ENCODE measurements at regions of chr5 and their contacts with region 1.

Region 1: GRCh38 chr5:138575194-138576015 is at the start of gene HSPA9:
- DNase-seq: peak; percentile 99
- H3K4me3 Mint-ChIP-seq: peak within 1 kb of the TSS; percentile 98
- H3K27ac Mint-ChIP-seq: peak within 1 kb of the TSS; percentile 99
- H3K4me1 Mint-ChIP-seq: peaks cover 39% of the 10 kb centered on the region
- H3K27me3 Mint-ChIP-seq: no peaks in the 10 kb centered on the region
- total RNA-seq, gene HSPA9: 457 to 472 TPM

Region 2: DNA sequence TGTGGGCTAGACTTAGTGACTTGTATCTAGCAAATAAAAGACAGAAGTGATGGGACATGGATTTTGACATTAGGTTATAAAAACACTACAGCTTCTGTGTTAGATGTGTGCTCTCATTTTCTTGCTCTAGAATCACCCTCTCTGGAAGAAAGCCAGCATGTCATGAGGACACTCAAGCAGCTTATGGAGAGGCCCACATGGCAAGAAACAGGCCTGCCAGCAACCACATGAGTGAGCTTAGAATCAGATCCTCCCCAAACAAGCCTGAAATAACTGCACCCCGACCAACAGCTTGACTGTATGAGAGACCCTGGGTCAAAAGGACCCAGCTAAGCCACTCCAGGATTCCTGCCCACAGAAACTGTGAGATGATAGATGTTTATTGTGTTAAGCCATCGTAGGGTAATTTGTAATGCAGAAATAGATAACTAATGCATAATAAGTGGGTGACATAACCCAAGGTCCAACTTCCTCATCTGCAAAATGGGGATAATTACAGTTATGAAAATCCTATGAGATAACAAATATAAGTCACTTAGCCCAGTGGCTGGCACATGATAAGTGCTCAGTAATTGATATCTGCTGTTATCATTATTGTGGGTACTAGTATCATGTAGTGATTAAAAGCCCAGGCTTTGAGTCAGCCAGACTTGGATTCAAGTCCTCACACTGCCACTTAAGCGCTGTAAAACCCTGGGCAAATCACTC is 926.0 kb before region 1 on chr5:
- CTCF ChIA-PET with region 1: no interaction called
- intact Hi-C with region 1: no loop called
- DNase-seq: no peak
- H3K4me3 Mint-ChIP-seq: no peak overlapping the region
- H3K27ac Mint-ChIP-seq: no peak overlapping the region
- H3K4me1 Mint-ChIP-seq: no peaks in the 10 kb centered on the region
- H3K27me3 Mint-ChIP-seq: no peaks in the 10 kb centered on the region

Region 3: DNA sequence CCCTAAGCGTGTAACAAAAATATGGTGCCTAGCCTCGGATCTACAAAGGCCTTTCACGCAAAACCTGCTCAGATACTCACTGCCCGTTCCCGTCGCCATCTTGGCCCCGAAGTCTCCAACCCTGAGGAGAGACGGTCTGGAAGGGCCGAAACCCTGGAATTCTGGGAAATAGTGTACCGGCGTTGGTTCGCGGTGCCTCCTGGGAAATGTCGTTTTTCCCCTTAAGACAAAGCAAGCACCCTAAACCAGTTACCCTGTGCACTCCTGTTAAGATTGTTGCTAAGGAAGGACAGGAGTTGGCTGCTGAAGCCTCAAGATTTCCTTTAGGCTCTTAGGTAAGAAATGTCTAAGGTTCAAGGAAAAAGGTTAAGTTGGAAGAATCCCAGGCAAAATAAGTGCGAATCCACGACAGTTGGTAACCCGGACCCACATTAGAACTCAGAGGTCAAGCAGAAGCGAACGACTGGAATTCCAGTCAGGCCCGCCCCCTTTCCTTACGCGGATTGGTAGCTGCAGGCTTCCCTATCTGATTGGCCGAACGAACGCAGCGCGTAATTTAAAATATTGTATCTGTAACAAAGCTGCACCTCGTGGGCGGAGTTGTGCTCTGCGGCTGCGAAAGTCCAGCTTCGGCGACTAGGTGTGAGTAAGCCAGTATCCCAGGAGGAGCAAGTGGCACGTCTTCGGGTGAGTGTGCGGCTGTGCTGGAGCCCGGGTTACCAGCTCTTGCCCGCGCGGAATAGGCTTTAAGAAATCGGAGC is 396.7 kb before region 1 on chr5 and contains the starts of genes BRD8 and KIF20A:
- CTCF ChIA-PET with region 1: no interaction called
- intact Hi-C with region 1: loop called (anchors 1 kb)
- DNase-seq: peak; percentile 98
- H3K4me3 Mint-ChIP-seq: no peak within 1 kb of the TSS
- H3K27ac Mint-ChIP-seq: peak within 1 kb of the TSS; percentile 63
- H3K4me1 Mint-ChIP-seq: peaks cover 12% of the 10 kb centered on the region
- H3K27me3 Mint-ChIP-seq: no peaks in the 10 kb centered on the region
- total RNA-seq, gene BRD8: 94.8 to 95.6 TPM
- total RNA-seq, gene KIF20A: 78.9 to 81.9 TPM

Region 4: DNA sequence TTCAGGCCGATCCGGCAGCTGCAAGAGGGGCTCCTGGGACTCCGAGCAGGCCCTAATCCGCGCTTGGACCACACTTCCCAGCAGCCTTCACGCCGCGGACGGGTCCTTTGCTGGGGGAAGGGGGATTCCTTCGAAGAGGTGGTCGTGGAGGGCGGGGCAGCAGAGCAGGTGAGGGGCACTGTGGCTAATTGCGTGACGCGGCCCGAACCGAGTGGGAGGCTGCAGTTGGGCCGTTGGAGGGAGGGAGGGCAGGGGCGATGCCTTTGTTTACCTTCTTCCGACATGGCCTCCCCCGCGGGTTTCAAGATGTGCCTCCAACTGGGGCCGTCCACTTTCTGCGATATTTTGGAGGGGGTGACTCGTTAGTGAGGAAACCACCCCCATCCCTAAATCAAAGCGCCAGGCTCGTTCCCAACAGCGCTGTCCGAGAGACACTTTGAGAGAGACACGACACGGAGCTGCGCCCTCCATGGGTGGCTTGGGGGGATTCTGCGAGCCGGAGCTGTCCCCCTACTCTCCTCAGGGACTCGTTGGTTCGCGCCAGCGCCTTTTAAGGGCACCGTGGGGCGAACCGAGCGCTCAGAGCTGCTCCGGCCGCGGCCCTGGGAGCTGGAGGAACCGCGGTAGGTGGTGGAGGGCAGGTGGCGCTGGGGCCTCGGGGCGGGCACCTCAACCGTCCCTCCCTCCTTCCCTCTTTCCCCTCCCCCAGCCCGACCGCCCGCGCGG is 237.6 kb before region 1 on chr5 and contains the start of gene FAM53C:
- CTCF ChIA-PET with region 1: no interaction called
- intact Hi-C with region 1: loop called (anchors 2 kb)
- DNase-seq: peak; percentile 91
- H3K4me3 Mint-ChIP-seq: peak within 1 kb of the TSS; percentile 87
- H3K27ac Mint-ChIP-seq: peak within 1 kb of the TSS; percentile 98
- H3K4me1 Mint-ChIP-seq: peaks cover 27% of the 10 kb centered on the region
- H3K27me3 Mint-ChIP-seq: no peaks in the 10 kb centered on the region
- total RNA-seq, gene FAM53C: 20.7 to 21.8 TPM

Region 5: GRCh38 chr5:138594305-138595058 is 19.1 kb after region 1 on chr5:
- CTCF ChIA-PET with region 1: interaction called, 15 read pairs
- intact Hi-C with region 1: no loop called
- DNase-seq: no peak
- H3K4me3 Mint-ChIP-seq: no peak overlapping the region
- H3K27ac Mint-ChIP-seq: no peak overlapping the region
- H3K4me1 Mint-ChIP-seq: no peaks in the 10 kb centered on the region
- H3K27me3 Mint-ChIP-seq: peaks cover 25% of the 10 kb centered on the region

Region 6: GRCh38 chr5:138654281-138654867 is 79.0 kb after region 1 on chr5:
- CTCF ChIA-PET with region 1: no interaction called
- intact Hi-C with region 1: loop called (anchors 1 kb)
- DNase-seq: peak; percentile 85
- H3K4me3 Mint-ChIP-seq: no peak overlapping the region
- H3K27ac Mint-ChIP-seq: peak overlapping the region; percentile 31
- H3K4me1 Mint-ChIP-seq: peaks cover 19% of the 10 kb centered on the region
- H3K27me3 Mint-ChIP-seq: peaks cover 78% of the 10 kb centered on the region

Region 7: DNA sequence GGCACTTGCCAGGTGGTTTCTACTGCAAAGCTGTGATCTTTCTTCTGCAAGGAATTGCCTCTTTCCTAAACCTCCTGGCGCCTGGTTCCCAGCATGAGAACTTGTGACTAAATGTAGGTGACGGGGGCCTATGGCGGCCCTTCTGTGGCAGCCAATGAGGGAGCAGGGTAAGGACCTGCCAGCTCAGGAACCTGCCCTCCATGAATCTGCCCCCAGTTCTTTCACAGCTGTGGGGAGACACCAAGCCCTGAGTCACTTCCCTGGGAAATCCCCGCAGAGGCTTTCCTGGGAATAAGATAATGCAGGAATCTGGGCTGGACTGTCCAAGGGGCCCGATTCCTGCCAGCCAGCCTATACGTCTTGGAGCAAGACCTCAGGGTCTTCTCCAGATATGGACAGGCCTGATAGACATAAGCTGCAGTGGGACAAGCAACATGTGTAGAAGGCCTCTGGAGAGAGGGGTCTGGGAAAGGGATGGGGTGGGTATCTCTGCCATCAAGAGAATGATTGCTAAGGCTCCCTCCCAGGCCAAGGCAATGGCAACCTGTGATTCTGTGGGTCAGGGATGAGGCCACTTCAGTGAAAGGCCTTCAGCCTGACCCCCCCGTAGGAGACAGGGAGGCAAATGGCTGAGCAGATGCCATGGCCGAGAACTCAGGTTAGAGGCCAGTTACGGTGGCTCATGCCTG is 121.2 kb after region 1 on chr5:
- CTCF ChIA-PET with region 1: no interaction called
- intact Hi-C with region 1: no loop called
- DNase-seq: no peak
- H3K4me3 Mint-ChIP-seq: no peak overlapping the region
- H3K27ac Mint-ChIP-seq: no peak overlapping the region
- H3K4me1 Mint-ChIP-seq: peaks cover 2% of the 10 kb centered on the region
- H3K27me3 Mint-ChIP-seq: peaks cover 45% of the 10 kb centered on the region

Region 8: GRCh38 chr5:139262742-139263445 is 687.5 kb after region 1 on chr5:
- CTCF ChIA-PET with region 1: interaction called, 5 read pairs
- intact Hi-C with region 1: loop called (anchors 1 kb)
- DNase-seq: peak; percentile 86
- H3K4me3 Mint-ChIP-seq: no peak overlapping the region
- H3K27ac Mint-ChIP-seq: no peak overlapping the region
- H3K4me1 Mint-ChIP-seq: peaks cover 2% of the 10 kb centered on the region
- H3K27me3 Mint-ChIP-seq: no peaks in the 10 kb centered on the region

Region 9: DNA sequence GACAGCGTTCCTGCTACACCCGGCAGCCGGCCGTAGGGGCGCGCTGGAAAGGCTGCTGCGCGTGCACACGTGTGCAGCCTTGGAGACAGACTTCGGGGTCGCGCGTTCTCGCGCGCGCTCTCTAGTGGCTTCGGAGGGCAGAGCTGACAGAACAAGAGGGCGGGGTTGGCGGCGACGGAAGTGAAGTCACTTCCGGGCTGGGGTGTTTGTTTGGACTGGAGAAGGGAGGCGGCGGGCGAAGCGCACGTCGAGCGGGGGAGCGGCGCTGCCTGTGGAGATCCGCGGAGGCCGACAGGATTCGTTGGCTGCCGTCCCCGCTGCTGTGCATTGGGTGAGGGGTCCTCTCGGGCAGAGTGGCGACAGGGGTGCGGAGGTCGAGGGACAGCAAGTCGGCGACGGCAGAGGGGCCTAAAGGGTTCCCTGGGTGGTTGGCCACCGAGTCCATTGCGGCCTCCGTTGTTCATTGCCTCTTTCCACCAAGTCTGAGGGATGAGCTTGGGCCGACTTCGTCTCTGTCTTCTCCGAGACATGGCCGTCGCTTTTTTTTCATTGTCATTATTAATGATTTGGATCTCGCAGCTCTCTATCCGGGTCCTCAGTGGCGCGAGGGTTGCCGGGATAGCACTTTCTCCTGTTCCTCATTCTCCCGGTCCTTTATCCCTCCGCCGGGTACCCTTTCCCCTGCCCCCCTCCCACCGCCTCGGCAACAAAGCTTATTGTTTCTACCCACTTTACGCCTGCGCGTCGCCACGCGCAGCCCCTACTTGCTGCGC is 766.4 kb after region 1 on chr5 and contains the start of gene PAIP2:
- CTCF ChIA-PET with region 1: interaction called, 3 read pairs
- intact Hi-C with region 1: loop called (anchors 1 kb)
- DNase-seq: peak; percentile 99
- H3K4me3 Mint-ChIP-seq: peak within 1 kb of the TSS; percentile 100
- H3K27ac Mint-ChIP-seq: peak within 1 kb of the TSS; percentile 99
- H3K4me1 Mint-ChIP-seq: peaks cover 48% of the 10 kb centered on the region
- H3K27me3 Mint-ChIP-seq: no peaks in the 10 kb centered on the region
- total RNA-seq, gene PAIP2: 68.8 to 74.3 TPM